ENCODE measurements at regions of chr13 and their contacts with region 1.

Region 1: DNA sequence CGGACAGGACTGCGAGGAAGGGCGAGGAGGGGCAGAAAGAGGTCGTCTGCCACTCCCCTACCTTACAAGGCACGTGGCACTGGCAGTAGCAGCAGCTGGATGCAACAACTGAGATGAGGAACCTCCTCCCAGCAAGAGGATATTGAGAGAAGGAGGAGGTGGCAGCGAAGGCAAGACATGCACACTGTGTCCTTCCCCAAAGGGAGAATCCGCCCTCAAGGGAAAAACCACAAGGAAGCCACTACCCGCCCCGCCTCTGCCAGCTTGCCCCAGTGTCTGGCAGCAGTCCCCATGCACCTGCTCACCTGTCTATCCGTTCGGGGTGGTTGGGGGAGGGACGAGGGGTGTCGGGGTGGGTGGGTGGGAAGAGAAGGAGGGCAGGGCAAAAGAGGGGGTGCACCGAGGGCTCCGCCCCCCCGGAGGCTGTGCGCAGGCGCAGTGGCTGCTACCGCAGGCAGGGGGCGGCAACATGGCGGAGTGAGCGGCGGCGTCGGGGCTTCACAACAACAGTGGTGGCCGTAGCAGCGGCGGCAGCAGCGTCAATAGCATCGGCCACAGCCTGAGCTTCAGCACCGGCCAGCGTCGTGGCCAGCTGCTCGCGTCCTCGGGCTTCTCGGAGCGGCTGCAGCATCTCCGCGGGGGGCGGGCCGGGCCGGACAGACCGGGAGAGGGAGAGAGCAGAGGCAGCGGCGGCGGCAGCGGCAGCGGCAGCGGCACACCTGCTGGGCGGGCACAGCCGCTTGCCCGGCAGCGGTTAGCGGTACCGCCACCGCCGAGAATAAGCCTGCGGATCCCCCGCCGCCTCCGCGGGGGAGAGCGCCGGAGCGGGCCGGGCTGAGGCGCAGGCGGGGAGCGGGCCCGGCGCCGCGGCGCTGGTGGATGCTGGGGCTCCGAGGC is at the start of gene NBEA:
- DNase-seq: peak; percentile 86
- ATAC-seq: peak; percentile 64
- H3K4me3 Mint-ChIP-seq: peak within 1 kb of the TSS; percentile 83
- H3K27ac Mint-ChIP-seq: peak within 1 kb of the TSS; percentile 20
- H3K4me1 Mint-ChIP-seq: peaks cover 22% of the 10 kb centered on the region
- H3K27me3 Mint-ChIP-seq: peaks cover 33% of the 10 kb centered on the region
- total RNA-seq, gene NBEA: 0.39 to 0.44 TPM

Region 2: DNA sequence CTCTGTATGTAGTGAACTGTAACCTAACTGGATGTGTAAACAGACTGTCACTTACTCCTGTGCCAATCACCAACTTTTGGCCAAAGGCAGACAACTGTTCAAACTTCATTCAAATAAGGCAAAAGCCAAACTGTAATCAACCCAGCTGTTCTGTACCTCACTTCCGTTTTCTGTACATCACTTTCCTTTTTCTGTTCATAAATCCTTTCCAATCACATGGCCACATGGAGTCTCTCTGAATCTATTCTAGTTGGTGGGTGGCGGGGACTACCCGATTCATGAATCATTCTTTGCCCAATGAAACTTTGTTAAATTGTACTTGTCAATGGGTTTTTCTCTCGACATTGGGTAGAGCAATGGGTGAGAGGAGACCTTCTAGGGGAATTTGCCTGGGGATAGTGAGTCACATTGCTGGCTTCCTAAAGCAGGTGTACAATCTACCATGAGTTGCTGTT is 1302.4 kb before region 1 on chr13:
- CTCF ChIA-PET with region 1: no interaction called
- POLR2A ChIA-PET with region 1: no interaction called
- intact Hi-C with region 1: loop called in 1 of 2 experiments (anchors 5 kb)
- DNase-seq: peak; percentile 79
- ATAC-seq: peak; percentile 89
- H3K4me3 Mint-ChIP-seq: no peak overlapping the region
- H3K27ac Mint-ChIP-seq: peak overlapping the region; percentile 88
- H3K4me1 Mint-ChIP-seq: peaks cover 50% of the 10 kb centered on the region
- H3K27me3 Mint-ChIP-seq: peaks cover under 1% of the 10 kb centered on the region

Region 3: DNA sequence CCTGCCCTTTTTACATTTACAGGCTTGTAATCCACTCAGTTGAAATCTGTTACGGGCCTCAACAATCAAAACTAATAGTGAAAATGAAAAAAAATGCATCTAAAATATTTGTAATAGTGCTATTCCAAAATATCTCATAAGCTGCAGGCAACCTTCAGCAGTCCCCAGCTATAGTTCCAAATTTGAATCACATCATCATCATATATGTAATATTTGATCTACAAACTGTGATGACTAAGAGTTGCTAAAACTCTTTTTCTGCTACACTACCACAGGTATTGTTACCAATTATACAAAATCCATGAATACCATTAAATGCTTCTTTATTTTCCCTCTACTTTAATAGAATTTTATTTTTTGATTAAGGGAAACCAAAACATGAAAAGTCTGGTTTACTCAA is 1245.6 kb before region 1 on chr13:
- CTCF ChIA-PET with region 1: no interaction called
- POLR2A ChIA-PET with region 1: no interaction called
- intact Hi-C with region 1: no loop called
- DNase-seq: no peak
- ATAC-seq: peak; percentile 68
- H3K4me3 Mint-ChIP-seq: no peak overlapping the region
- H3K27ac Mint-ChIP-seq: peak overlapping the region; percentile 37
- H3K4me1 Mint-ChIP-seq: peaks cover 8% of the 10 kb centered on the region
- H3K27me3 Mint-ChIP-seq: peaks cover 7% of the 10 kb centered on the region

Region 4: DNA sequence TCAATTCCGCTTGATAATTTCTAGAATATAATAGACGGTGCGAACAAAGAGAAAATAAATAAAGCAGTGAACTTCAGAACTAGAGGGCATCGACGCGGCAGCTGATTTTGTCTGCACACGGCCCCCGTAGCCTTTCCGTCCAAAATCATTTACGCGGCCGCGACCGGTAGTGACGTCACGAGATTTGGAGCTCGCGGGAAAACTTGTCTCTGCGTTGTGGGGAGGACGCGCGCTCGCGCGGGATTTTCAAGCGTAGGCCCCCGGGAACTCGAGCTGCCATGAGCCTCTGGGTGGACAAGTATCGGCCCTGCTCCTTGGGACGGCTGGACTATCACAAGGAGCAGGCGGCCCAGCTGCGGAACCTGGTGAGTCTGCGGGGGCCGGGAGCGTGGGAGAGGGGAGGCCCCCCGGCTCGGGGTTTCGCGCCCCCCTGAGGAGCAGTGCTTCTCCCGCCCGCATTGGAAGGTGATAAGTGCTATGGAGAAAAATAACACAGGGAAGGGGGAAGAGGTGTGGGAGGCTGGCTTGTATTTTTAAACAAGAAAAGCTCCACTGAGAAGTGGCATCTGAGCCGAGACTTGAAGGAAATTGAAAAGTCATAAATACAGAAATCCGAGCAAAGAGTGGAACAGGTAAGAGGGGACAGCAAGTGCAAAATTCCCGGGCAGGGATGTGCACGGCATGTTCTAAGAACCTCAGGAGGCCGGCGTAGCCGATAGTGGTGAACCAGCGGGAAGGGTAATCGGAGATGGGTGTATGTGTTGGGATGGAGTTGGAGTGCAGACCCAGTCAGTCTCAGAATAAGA is 1124.0 kb before region 1 on chr13 and contains the start of gene RFC3:
- CTCF ChIA-PET with region 1: no interaction called
- POLR2A ChIA-PET with region 1: no interaction called
- intact Hi-C with region 1: loop called in 1 of 2 experiments (anchors 2 kb)
- DNase-seq: peak; percentile 96
- ATAC-seq: peak; percentile 97
- H3K4me3 Mint-ChIP-seq: peak within 1 kb of the TSS; percentile 96
- H3K27ac Mint-ChIP-seq: peak within 1 kb of the TSS; percentile 97
- H3K4me1 Mint-ChIP-seq: peaks cover 29% of the 10 kb centered on the region
- H3K27me3 Mint-ChIP-seq: no peaks in the 10 kb centered on the region
- total RNA-seq, gene RFC3: 64.6 to 66.4 TPM

Region 5: GRCh38 chr13:34156841-34157365 is 785.2 kb before region 1 on chr13:
- CTCF ChIA-PET with region 1: no interaction called
- POLR2A ChIA-PET with region 1: no interaction called
- intact Hi-C with region 1: loop called in 1 of 2 experiments (anchors 5 kb)
- DNase-seq: peak; percentile 80
- ATAC-seq: peak; percentile 96
- H3K4me3 Mint-ChIP-seq: peak overlapping the region; percentile 20
- H3K27ac Mint-ChIP-seq: peak overlapping the region; percentile 68
- H3K4me1 Mint-ChIP-seq: peaks cover 14% of the 10 kb centered on the region
- H3K27me3 Mint-ChIP-seq: peaks cover 24% of the 10 kb centered on the region

Region 6: DNA sequence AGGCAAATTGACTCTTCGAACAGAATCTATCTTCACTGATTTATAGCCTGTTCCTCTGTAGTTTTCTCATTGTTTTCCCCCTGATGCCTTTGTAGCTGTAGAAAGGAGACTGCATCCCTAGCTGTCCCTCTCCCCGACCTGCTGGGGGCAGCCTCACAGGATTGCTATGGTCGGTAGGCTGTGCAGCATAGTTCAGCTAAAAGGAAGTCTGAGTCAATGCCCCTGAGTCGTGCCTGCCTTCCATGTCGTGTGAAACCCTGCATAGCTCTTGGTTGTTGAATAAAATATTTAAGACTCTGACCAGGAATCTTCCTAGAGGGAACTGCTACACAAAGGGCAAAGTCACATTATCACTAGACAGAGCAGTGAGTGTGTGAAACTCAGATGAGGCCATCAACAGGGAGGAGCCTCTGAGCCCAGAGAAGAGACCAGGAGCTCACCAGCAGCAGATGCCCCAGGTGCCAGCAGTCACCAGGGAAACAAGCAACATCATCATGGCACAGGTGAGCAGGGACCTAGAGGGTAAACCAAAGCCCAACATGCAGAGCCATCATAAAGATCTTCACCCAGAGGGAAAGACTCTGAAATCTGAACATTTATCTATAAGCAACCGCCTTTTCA is 108.4 kb before region 1 on chr13:
- CTCF ChIA-PET with region 1: no interaction called
- POLR2A ChIA-PET with region 1: no interaction called
- intact Hi-C with region 1: no loop called
- DNase-seq: peak; percentile 21
- ATAC-seq: peak; percentile 33
- H3K4me3 Mint-ChIP-seq: no peak overlapping the region
- H3K27ac Mint-ChIP-seq: no peak overlapping the region
- H3K4me1 Mint-ChIP-seq: no peaks in the 10 kb centered on the region
- H3K27me3 Mint-ChIP-seq: peaks cover 8% of the 10 kb centered on the region

Region 7: GRCh38 chr13:35157143-35157755 is 215.2 kb after region 1 on chr13:
- CTCF ChIA-PET with region 1: no interaction called
- POLR2A ChIA-PET with region 1: no interaction called
- intact Hi-C with region 1: loop called (anchors 5 to 10 kb)
- DNase-seq: peak; percentile 47
- ATAC-seq: peak; percentile 39
- H3K4me3 Mint-ChIP-seq: no peak overlapping the region
- H3K27ac Mint-ChIP-seq: no peak overlapping the region
- H3K4me1 Mint-ChIP-seq: peaks cover 2% of the 10 kb centered on the region
- H3K27me3 Mint-ChIP-seq: no peaks in the 10 kb centered on the region

Region 8: GRCh38 chr13:35470671-35471661 is 528.9 kb after region 1 on chr13:
- CTCF ChIA-PET with region 1: no interaction called
- POLR2A ChIA-PET with region 1: no interaction called
- intact Hi-C with region 1: loop called in 1 of 2 experiments (anchors 5 kb)
- DNase-seq: no peak
- ATAC-seq: no peak
- H3K4me3 Mint-ChIP-seq: peak overlapping the region; percentile 28
- H3K27ac Mint-ChIP-seq: no peak overlapping the region
- H3K4me1 Mint-ChIP-seq: peaks cover 17% of the 10 kb centered on the region
- H3K27me3 Mint-ChIP-seq: peaks cover 63% of the 10 kb centered on the region